ENCODE measurements at regions of chr6 and their contacts with region 1.

Region 1: GRCh38 chr6:77292564-77293546 is 170.4 kb downstream of the HTR1B start:
- DNase-seq: peak; percentile 52 to 66
- H3K4me3 ChIP-seq: no peak overlapping the region
- H3K4me3 Mint-ChIP-seq: peak overlapping the region; percentile 48
- H3K27ac Mint-ChIP-seq: peak overlapping the region; percentile 79
- H3K4me1 ChIP-seq: peaks cover 21% of the 10 kb centered on the region
- H3K4me1 Mint-ChIP-seq: peaks cover 17% of the 10 kb centered on the region
- H3K27me3 ChIP-seq: no peaks in the 10 kb centered on the region
- H3K27me3 Mint-ChIP-seq: no peaks in the 10 kb centered on the region
- CTCF ChIP-seq: no peak

Region 2: DNA sequence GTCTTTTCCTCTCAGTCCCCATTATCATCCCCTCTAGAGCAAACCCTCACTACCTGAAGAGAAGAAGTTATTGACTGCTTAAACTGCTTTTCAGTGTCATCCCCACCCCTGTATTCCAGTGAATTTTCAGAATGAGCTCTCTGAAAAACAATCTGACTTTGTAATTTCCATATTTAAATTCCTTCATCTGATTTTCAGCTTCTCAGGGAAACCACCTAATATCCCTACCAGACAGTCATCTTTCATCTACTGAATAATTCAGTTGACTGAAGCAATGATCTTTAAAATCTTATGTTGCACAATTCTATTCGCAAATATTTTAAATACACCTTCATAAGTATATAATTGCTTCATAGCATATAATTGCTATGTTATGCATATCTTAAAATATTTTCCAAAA is 88.3 kb before region 1 on chr6:
- CTCF ChIA-PET with region 1: no interaction called
- POLR2A ChIA-PET with region 1: no interaction called
- intact Hi-C with region 1: no loop called
- DNase-seq: no peak
- H3K4me3 ChIP-seq: no peak overlapping the region
- H3K4me3 Mint-ChIP-seq: no peak overlapping the region
- H3K27ac Mint-ChIP-seq: no peak overlapping the region
- H3K4me1 ChIP-seq: no peaks in the 10 kb centered on the region
- H3K4me1 Mint-ChIP-seq: no peaks in the 10 kb centered on the region
- H3K27me3 ChIP-seq: no peaks in the 10 kb centered on the region
- H3K27me3 Mint-ChIP-seq: no peaks in the 10 kb centered on the region
- CTCF ChIP-seq: no peak

Region 3: DNA sequence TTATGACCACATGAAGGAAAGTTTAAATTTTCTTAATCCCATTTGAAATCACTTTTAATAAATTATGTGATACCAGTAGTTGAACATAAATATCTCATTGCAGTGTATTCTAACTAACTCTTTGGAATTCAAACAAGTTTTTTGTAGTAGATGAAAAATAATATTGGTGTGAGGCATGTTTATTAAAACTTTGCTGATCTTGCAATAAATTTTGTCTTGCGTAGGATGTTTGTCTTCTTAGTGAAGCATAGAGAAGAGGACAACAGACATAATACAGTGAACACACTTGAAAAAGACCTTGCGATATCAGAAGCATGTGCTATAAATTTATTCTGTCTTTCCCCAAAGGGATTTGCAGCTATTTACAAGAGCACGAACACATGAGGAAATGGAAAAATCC is 29.7 kb after region 1 on chr6:
- CTCF ChIA-PET with region 1: no interaction called
- POLR2A ChIA-PET with region 1: no interaction called
- intact Hi-C with region 1: loop called (anchors 1 kb)
- DNase-seq: no peak
- H3K4me3 ChIP-seq: no peak overlapping the region
- H3K4me3 Mint-ChIP-seq: no peak overlapping the region
- H3K27ac Mint-ChIP-seq: no peak overlapping the region
- H3K4me1 ChIP-seq: 0 out of 2 replicates have a peak, but pooled peaks cover 7% of the 10 kb centered on the region
- H3K4me1 Mint-ChIP-seq: no peaks in the 10 kb centered on the region
- H3K27me3 ChIP-seq: no peaks in the 10 kb centered on the region
- H3K27me3 Mint-ChIP-seq: no peaks in the 10 kb centered on the region
- CTCF ChIP-seq: no peak

Region 4: GRCh38 chr6:77383026-77383425 is 90.2 kb after region 1 on chr6:
- CTCF ChIA-PET with region 1: no interaction called
- POLR2A ChIA-PET with region 1: no interaction called
- intact Hi-C with region 1: loop called (anchors 1 kb)
- DNase-seq: peak; percentile 74 to 81
- H3K4me3 ChIP-seq: no peak overlapping the region
- H3K4me3 Mint-ChIP-seq: no peak overlapping the region
- H3K27ac Mint-ChIP-seq: peak overlapping the region; percentile 53
- H3K4me1 ChIP-seq: peaks cover 15% of the 10 kb centered on the region
- H3K4me1 Mint-ChIP-seq: peaks cover 19% of the 10 kb centered on the region
- H3K27me3 ChIP-seq: no peaks in the 10 kb centered on the region
- H3K27me3 Mint-ChIP-seq: no peaks in the 10 kb centered on the region
- CTCF ChIP-seq: no peak

Measured in Caco-2 (cell line).